ENCODE measurements at regions of chr10 and their contacts with region 1.

Region 1: DNA sequence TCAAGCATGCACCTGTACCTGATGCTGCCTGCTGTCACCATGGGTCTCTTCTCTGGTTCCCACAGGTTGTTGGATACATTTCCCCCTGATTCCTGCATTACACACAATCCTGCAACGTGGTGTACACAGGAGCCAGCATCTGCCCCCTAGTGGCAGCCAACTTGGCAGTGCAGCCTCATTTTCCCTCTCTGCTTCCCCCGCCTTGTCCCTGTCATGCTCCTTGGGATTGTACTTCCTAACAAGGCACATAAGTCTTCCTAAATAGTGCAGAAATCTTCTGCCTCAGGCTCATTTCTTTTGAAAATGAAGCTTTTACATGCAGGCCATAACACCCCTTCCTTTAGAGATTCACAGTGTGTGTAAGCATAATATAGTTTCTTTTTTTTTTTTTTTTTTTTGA is 387.5 kb downstream of the CCSER2 start:
- DNase-seq: peak; percentile 26
- H3K4me3 ChIP-seq: no peak overlapping the region
- H3K27ac ChIP-seq: no peak overlapping the region
- H3K4me1 ChIP-seq: no peaks in the 10 kb centered on the region
- H3K27me3 ChIP-seq: no peaks in the 10 kb centered on the region
- CTCF ChIP-seq: peak; percentile 89 to 96

Region 2: GRCh38 chr10:84659497-84660439 is 56.1 kb before region 1 on chr10:
- CTCF ChIA-PET with region 1: no interaction called
- dilution Hi-C with region 1: loop called (anchors 5 kb)
- in situ Hi-C with region 1: no loop called
- intact Hi-C with region 1: no loop called
- DNase-seq: no peak
- H3K4me3 ChIP-seq: no peak overlapping the region
- H3K27ac ChIP-seq: no peak overlapping the region
- H3K4me1 ChIP-seq: no peaks in the 10 kb centered on the region
- H3K27me3 ChIP-seq: no peaks in the 10 kb centered on the region
- CTCF ChIP-seq: no peak

Region 3: DNA sequence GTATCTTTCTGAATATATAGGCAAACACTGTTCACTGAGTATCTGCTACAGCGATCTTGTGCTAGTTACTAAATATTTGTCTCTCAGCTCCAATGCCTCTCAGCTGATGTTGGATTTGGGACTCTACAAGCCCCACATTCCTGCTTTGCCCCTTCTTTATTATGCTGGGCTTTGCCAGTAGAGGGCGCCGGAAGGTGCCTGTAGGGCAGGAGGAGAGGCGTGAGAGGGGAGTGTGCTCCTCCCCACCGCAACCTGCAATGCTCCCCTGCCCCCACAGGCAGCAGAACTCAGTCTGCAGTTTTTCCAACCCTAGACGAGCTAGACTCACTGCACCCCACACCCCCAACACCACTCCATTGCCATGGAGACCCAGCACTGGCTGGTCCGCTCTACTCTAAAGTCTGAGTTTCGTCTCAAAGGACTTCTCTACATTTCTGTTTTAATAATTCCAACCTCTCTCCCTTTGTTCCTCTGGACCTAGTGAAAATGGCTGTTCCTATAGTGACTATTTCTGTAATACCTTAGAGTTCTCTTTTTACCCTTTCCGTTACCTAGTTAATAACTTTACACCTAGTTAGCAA is 49.9 kb before region 1 on chr10:
- CTCF ChIA-PET with region 1: no interaction called
- dilution Hi-C with region 1: loop called (anchors 5 kb)
- in situ Hi-C with region 1: no loop called
- intact Hi-C with region 1: loop called (anchors 1 kb)
- DNase-seq: peak; percentile 15
- H3K4me3 ChIP-seq: no peak overlapping the region
- H3K27ac ChIP-seq: no peak overlapping the region
- H3K4me1 ChIP-seq: no peaks in the 10 kb centered on the region
- H3K27me3 ChIP-seq: no peaks in the 10 kb centered on the region
- CTCF ChIP-seq: peak; percentile 87 to 92

Region 4: GRCh38 chr10:84850826-84851225 is 134.9 kb after region 1 on chr10:
- CTCF ChIA-PET with region 1: no interaction called
- dilution Hi-C with region 1: no loop called
- in situ Hi-C with region 1: no loop called
- intact Hi-C with region 1: no loop called
- DNase-seq: no peak
- H3K4me3 ChIP-seq: no peak overlapping the region
- H3K27ac ChIP-seq: no peak overlapping the region
- H3K4me1 ChIP-seq: no peaks in the 10 kb centered on the region
- H3K27me3 ChIP-seq: peaks cover 5% of the 10 kb centered on the region
- CTCF ChIP-seq: no peak

Measured in mammary epithelial cell (primary cell).